WTC11 (cell line): ENCODE measurements at regions of chr1 and their contacts with region 1.

Region 1: DNA sequence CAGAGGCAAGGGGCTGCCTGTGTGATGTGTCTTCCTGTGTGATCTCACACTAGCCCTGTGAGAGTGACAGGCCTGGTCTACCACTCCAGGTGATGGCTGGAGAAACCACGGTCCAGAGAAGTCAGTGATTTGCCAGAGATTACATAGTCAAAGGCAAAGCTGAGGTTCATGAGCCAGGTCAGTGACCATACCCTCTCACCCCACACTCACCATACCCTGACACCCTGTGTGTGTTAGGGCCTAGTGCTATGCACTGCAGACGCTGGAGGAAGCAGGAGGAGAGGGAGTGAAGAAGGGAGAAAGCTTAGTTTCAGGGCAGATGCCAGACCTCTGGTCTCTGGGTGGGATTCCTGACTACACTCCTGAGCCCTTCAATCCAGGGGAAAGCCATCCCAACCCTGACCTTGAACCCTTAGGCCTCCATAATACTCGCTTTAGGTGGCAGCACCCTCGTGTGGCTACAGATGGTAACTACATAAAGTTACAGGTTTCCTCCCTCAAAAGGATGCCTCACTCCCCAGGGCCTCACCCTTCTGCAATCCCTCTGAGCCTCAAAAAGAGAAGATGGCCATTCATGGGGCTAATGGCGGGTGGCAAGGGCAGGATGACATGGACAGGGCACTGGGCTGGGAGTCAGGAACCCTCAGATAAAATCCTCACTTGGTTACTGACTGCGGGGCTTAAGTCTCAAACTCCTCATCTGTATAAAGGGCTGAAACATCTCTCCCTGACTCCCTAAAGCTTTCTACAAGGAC is 20.8 kb upstream of the SDC3 start:
- DNase-seq: peak; percentile 65
- ATAC-seq: peak; percentile 71
- H3K4me3 Mint-ChIP-seq: no peak overlapping the region
- H3K27ac Mint-ChIP-seq: 0 out of 2 replicates have a peak overlapping the region, but pooled peaks have one; percentile 58
- H3K4me1 Mint-ChIP-seq: peaks cover 5% of the 10 kb centered on the region
- H3K27me3 Mint-ChIP-seq: no peaks in the 10 kb centered on the region
- CTCF ChIP-seq: peak; percentile 87; the same call in 1 of the 2 replicates

Region 2: GRCh38 chr1:30919025-30919881 is 10.1 kb before region 1 on chr1:
- CTCF ChIA-PET with region 1: interaction called, 19 read pairs
- POLR2A ChIA-PET with region 1: interaction called, 3 read pairs
- DNase-seq: no peak
- ATAC-seq: peak; percentile 39
- H3K4me3 Mint-ChIP-seq: no peak overlapping the region
- H3K27ac Mint-ChIP-seq: no peak overlapping the region
- H3K4me1 Mint-ChIP-seq: no peaks in the 10 kb centered on the region
- H3K27me3 Mint-ChIP-seq: no peaks in the 10 kb centered on the region
- CTCF ChIP-seq: no peak

Region 3: GRCh38 chr1:31633053-31633452 is 703.7 kb after region 1 on chr1:
- CTCF ChIA-PET with region 1: interaction called, 10 read pairs
- POLR2A ChIA-PET with region 1: no interaction called
- DNase-seq: peak; percentile 75
- ATAC-seq: peak; percentile 86
- H3K4me3 Mint-ChIP-seq: no peak overlapping the region
- H3K27ac Mint-ChIP-seq: peak overlapping the region; percentile 76; the same call in 1 of the 2 replicates
- H3K4me1 Mint-ChIP-seq: no peaks in the 10 kb centered on the region
- H3K27me3 Mint-ChIP-seq: no peaks in the 10 kb centered on the region
- CTCF ChIP-seq: peak; percentile 54; the same call in 1 of the 2 replicates